ENCODE measurements at regions of chr12 and their contacts with region 1.

Region 1: GRCh38 chr12:14995583-14996425 is 23.0 kb downstream of the PDE6H start:
- DNase-seq: peak in 1 of 2 experiments; percentile 68
- H3K4me3 ChIP-seq: no peak overlapping the region
- H3K27ac ChIP-seq: no peak overlapping the region
- H3K4me1 ChIP-seq: peaks cover 17% of the 10 kb centered on the region
- H3K27me3 ChIP-seq: no peaks in the 10 kb centered on the region
- CTCF ChIP-seq: peak; percentile 85

Region 2: GRCh38 chr12:14185427-14186192 is 810.2 kb before region 1 on chr12:
- CTCF ChIA-PET with region 1: no interaction called
- POLR2A ChIA-PET with region 1: no interaction called
- intact Hi-C with region 1: loop called (anchors 2 kb)
- DNase-seq: peak; percentile 39 to 48
- H3K4me3 ChIP-seq: no peak overlapping the region
- H3K27ac ChIP-seq: no peak overlapping the region
- H3K4me1 ChIP-seq: 0 out of 2 replicates have a peak, but pooled peaks cover 7% of the 10 kb centered on the region
- H3K27me3 ChIP-seq: no peaks in the 10 kb centered on the region
- CTCF ChIP-seq: peak; percentile 83

Region 3: DNA sequence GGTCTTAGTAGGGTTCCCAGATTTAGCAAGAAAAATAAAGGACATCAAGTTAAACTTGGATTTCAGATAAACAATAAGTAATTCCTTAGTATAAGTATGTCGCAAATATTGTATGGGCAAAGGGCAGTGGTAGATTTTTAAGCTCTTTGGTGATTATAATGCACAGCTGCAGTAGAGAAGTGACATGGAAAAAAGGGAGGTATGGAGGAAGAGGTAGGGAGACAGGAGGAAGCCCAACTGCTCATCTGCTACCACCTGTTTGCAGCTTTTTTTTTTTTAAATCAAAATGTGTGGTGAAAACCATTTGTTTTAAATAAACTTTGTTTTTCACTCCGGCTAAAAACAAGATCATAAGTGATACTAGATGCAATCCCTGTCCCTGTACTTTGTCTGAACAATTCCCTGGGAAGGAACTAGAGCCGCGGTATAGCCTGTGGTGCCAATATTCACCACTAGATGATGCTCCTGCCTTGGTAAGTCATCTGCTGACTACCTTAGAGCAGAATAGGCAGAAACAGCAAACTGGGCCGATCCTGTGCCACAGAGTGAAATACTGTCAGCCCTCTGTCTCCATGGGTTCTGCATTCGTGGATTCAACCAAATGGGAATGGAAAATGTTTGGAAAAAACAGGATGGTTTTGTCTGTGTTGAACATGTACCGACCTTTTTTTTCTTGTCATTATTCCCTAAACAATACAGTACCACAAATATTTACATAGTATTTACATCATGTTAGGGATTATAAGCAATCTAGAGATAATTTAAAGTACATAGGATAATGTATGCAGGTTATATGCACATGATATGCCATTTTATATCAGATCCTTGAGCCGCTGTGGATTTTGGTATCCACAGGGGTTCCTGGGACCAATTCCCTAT is 365.7 kb before region 1 on chr12:
- CTCF ChIA-PET with region 1: no interaction called
- POLR2A ChIA-PET with region 1: no interaction called
- intact Hi-C with region 1: loop called (anchors 1 kb)
- DNase-seq: peak; percentile 51 to 75
- H3K4me3 ChIP-seq: no peak overlapping the region
- H3K27ac ChIP-seq: no peak overlapping the region
- H3K4me1 ChIP-seq: no peaks in the 10 kb centered on the region
- H3K27me3 ChIP-seq: no peaks in the 10 kb centered on the region
- CTCF ChIP-seq: peak; percentile 94

Region 4: DNA sequence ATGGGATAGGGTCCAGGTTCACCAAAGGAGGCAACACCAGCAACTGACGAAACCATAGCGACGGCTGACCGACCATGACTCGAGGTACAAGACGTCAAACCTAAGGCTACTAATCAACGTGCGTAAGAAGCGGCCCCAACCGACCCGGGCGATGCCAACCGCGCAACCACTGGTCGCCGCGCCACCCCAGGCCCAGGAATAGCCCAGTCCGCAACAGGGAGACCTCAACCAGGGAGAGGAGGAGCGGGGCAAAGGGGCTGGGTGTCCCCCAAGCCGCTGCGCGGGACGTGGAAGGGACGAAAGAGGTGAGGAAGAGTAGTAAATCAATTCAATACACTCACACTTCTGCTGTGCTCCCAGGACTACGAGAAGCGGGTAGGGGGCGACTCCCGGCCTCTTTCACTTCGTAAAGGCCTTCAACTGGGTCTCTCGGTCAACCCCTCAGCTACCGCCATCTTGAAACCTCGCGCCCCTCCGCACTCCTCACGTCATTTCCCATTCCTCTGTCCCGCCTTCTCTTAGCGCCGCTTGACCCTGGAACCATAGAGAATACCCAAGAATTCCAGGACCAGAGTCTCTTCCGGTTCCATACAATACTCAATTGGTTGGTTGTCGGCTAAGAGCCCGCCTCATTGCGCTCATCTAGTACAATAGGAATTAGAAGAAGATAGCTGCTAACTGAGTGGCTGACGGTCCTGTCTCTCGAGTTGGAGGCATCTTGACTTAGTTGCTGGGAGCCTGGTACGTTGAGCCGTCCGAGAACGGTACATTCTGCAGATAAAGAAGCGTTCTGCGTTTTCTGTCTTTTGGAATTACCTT is 192.6 kb before region 1 on chr12 and contains the starts of genes C12orf60 and WBP11:
- CTCF ChIA-PET with region 1: no interaction called
- POLR2A ChIA-PET with region 1: interaction called, 6 read pairs
- intact Hi-C with region 1: loop called (anchors 2 kb)
- DNase-seq: peak; percentile 94 to 99
- H3K4me3 ChIP-seq: peak within 1 kb of the TSS; percentile 96
- H3K27ac ChIP-seq: peak within 1 kb of the TSS; percentile 58
- H3K4me1 ChIP-seq: peaks cover 23% of the 10 kb centered on the region
- H3K27me3 ChIP-seq: no peaks in the 10 kb centered on the region
- CTCF ChIP-seq: no peak
- total RNA-seq, gene C12orf60: 3.3 and 4.0 TPM in 2 replicates
- total RNA-seq, gene WBP11: 65.8 and 124 TPM in 2 replicates

Region 5: DNA sequence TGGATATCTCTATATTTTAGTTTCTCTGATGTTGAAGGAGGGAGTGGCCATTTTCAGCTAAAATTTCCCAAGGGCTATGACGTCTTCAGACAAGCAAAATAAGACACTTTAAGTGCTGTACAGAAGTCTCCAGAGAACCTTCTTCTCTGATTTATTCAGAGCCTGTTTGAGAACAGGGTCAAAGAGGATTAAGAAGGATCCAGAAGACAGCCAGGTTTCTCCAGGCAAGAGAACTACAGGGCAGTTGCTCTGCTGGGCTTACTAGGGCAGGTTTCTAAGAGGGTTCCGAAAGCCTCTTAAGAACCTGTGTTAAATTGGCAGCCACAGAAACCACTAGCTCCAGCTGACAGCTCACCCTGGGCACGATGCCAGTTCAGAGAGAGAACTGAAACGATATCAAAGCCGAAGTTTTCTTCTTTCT is 111.3 kb before region 1 on chr12:
- CTCF ChIA-PET with region 1: no interaction called
- POLR2A ChIA-PET with region 1: interaction called, 13 read pairs
- intact Hi-C with region 1: no loop called
- DNase-seq: peak; percentile 57 to 69
- H3K4me3 ChIP-seq: peak overlapping the region; percentile 52
- H3K27ac ChIP-seq: peak overlapping the region; percentile 59
- H3K4me1 ChIP-seq: peaks cover 48% of the 10 kb centered on the region
- H3K27me3 ChIP-seq: no peaks in the 10 kb centered on the region
- CTCF ChIP-seq: no peak

Region 6: DNA sequence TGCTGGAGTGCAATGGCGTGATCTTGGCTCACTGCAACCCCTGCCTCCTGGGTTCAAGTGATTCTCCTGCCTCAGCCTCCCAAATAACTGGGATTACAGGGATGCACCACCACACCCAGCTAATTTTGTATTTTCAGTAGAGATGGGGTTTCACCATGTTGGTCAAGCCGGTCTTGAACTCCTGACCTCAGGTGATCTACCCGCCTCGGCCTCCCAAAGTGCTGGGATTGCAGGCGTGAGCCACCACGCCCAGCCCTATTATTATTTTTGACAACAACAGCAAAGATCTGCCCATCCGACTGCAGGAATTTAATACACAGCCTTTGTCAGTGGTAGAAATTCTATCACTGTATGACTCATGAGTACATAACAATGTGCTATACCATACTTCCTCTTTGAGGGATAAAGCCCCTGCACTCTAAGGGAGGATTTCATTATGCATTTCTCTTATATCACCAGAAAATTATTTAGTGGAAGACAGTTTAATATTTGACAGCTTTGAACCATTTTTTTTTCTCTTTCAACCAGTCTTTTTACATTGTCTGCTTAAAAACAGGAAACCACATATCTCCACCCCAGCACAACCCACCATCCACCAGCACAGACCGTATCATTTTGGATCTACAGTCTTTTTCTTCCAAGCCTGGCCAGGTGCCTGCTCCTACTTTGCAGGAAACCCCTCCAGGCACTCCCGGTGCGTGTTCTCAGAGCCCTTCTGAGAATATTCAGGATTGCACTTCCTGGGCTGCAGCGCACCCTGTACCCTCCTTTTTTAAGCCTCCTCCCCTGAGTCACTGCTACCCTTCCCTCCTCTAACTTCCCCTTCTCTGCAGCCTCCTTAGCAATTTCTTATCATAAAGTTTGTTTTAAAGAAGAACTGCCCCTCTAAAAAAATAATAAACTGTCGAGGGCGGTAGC is 35.0 kb before region 1 on chr12:
- CTCF ChIA-PET with region 1: no interaction called
- POLR2A ChIA-PET with region 1: no interaction called
- intact Hi-C with region 1: loop called (anchors 2 kb)
- DNase-seq: peak; percentile 84 to 85
- H3K4me3 ChIP-seq: peak overlapping the region; percentile 54
- H3K27ac ChIP-seq: peak overlapping the region; percentile 83
- H3K4me1 ChIP-seq: peaks cover 53% of the 10 kb centered on the region
- H3K27me3 ChIP-seq: no peaks in the 10 kb centered on the region
- CTCF ChIP-seq: no peak

Region 7: GRCh38 chr12:15522565-15523187 is 526.9 kb after region 1 on chr12:
- CTCF ChIA-PET with region 1: no interaction called
- POLR2A ChIA-PET with region 1: no interaction called
- intact Hi-C with region 1: loop called (anchors 5 kb)
- DNase-seq: peak in 1 of 2 experiments; percentile 56
- H3K4me3 ChIP-seq: no peak overlapping the region
- H3K27ac ChIP-seq: no peak overlapping the region
- H3K4me1 ChIP-seq: 0 out of 2 replicates have a peak, but pooled peaks cover 5% of the 10 kb centered on the region
- H3K27me3 ChIP-seq: no peaks in the 10 kb centered on the region
- CTCF ChIP-seq: peak; percentile 76

Measured in PC-9 (cell line).